Activated T-helper 1 cell treated with anti-CD3 and anti-CD28 coated beads, Interleukin-12 subunit alpha, Interleukin-12 subunit beta, Interleukin-2, Interleukin-4 antibody, amounts not matched to agents 30 ng/mL and 10 ng/mL and 1 ng/mL, durations not matched to agents 14 hours and 24 hours and 36 hours (primary cell): ENCODE measurements at regions of chr2 and their contacts with region 1.

Region 1: DNA sequence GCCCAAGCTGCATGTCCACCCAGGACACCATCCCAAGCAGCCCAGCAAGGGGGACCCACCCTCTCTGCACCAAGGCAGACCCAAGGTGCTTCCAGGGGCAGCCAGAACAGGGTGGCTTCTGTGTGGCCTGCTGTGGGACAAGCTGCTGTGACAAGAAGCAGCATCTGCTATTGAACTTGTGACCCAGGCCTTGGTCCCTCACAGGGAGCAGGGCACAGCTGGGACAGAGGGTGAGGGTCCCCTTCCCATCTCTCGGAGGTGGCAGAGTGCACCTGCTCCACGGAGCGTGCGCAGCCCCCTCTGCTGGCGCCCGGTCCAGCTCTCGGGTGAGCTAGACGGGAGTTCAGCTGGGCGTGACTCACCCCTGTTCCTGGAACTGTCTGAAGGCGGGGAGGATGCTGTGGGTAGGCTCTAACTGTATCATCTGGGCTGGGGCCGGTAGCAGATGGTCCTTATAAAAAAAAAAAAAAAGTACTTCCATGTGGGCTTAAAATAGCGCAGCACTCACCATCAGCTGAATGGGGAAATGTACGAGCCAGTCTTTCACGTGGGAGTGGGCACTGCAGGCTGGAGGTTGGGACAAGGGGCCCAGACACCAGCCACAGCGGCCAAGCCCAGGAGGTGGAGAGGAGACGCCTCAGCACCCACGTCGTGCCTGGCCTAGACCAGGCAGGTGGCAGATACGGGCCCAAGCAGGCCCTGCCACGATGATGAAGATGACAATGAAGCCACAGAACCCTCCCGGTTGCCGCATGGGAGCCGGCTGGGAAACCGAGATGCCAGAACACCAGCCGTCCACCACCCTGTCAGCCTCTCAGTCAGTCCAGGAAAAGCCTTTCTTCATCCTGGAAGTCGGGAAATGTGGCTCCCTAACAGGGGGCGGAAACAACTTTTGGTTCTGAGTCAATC is 136.8 kb upstream of the ID2 start:
- DNase-seq: peak; percentile 83
- H3K4me3 Mint-ChIP-seq: peak overlapping the region; percentile 59
- H3K27ac Mint-ChIP-seq: peak overlapping the region; percentile 99
- H3K4me1 Mint-ChIP-seq: peaks cover 80% of the 10 kb centered on the region
- H3K27me3 Mint-ChIP-seq: no peaks in the 10 kb centered on the region

Region 2: GRCh38 chr2:7588295-7588694 is 956.7 kb before region 1 on chr2:
- intact Hi-C with region 1: loop called (anchors 5 kb)
- DNase-seq: no peak
- H3K4me3 Mint-ChIP-seq: peak overlapping the region; percentile 28
- H3K27ac Mint-ChIP-seq: peak overlapping the region; percentile 61
- H3K4me1 Mint-ChIP-seq: peaks cover 37% of the 10 kb centered on the region
- H3K27me3 Mint-ChIP-seq: no peaks in the 10 kb centered on the region

Region 3: GRCh38 chr2:7845332-7845731 is 699.7 kb before region 1 on chr2:
- intact Hi-C with region 1: loop called (anchors 1 kb)
- DNase-seq: no peak
- H3K4me3 Mint-ChIP-seq: no peak overlapping the region
- H3K27ac Mint-ChIP-seq: no peak overlapping the region
- H3K4me1 Mint-ChIP-seq: peaks cover 57% of the 10 kb centered on the region
- H3K27me3 Mint-ChIP-seq: no peaks in the 10 kb centered on the region

Region 4: GRCh38 chr2:8303322-8303832 is 241.7 kb before region 1 on chr2:
- intact Hi-C with region 1: loop called (anchors 1 kb)
- DNase-seq: peak; percentile 77
- H3K4me3 Mint-ChIP-seq: peak overlapping the region; percentile 65
- H3K27ac Mint-ChIP-seq: peak overlapping the region; percentile 85
- H3K4me1 Mint-ChIP-seq: peaks cover 91% of the 10 kb centered on the region
- H3K27me3 Mint-ChIP-seq: peaks cover 7% of the 10 kb centered on the region

Region 5: DNA sequence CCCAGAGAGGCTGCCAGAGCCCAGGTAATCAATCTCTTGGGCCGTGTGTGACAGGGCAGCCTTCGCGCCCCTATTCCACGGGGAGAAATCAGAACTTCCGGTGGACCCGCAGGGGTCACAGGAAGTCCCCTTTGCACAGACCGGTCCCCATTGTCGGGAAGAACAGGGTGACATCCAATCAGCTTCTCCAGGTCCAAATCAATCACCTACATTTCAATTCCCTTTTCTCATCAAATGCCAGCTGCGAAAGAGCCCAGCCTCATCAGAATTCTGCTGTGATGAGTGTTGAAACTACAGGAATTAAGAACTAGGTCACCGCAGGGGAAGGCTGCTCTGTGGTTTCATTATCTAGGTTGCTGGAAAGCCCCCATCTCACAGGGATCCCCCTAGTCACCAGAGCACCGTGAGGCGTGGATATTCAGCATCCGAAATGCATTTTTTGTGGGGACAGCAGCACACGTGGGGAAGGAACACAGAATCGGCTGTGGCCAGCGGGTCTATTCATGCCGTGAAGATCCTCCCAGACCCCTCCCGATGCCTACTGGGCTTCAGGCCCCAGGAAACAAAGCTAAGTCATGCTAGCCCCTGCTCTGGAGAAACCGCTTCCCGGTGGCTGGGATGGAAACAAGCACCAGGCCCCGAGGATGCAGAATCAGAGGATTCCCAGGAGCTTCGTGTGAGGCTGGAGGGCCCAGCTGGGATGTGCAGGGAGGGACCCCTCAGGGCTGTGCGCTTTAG is 56.9 kb before region 1 on chr2:
- intact Hi-C with region 1: loop called (anchors 1 kb)
- DNase-seq: peak; percentile 57
- H3K4me3 Mint-ChIP-seq: peak overlapping the region; percentile 75
- H3K27ac Mint-ChIP-seq: peak overlapping the region; percentile 86
- H3K4me1 Mint-ChIP-seq: peaks cover 61% of the 10 kb centered on the region
- H3K27me3 Mint-ChIP-seq: no peaks in the 10 kb centered on the region

Region 6: GRCh38 chr2:8566774-8567478 is 21.9 kb after region 1 on chr2:
- intact Hi-C with region 1: no loop called
- DNase-seq: no peak
- H3K4me3 Mint-ChIP-seq: no peak overlapping the region
- H3K27ac Mint-ChIP-seq: no peak overlapping the region
- H3K4me1 Mint-ChIP-seq: no peaks in the 10 kb centered on the region
- H3K27me3 Mint-ChIP-seq: peaks cover 6% of the 10 kb centered on the region

Region 7: GRCh38 chr2:8681786-8682692 is 137.0 kb after region 1 on chr2 and contains the start of gene ID2:
- intact Hi-C with region 1: loop called (anchors 1 kb)
- DNase-seq: peak; percentile 99
- H3K4me3 Mint-ChIP-seq: peak within 1 kb of the TSS; percentile 99
- H3K27ac Mint-ChIP-seq: peak within 1 kb of the TSS; percentile 97
- H3K4me1 Mint-ChIP-seq: peaks cover 41% of the 10 kb centered on the region
- H3K27me3 Mint-ChIP-seq: peaks cover 14% of the 10 kb centered on the region
- total RNA-seq, gene ID2: 301 and 306 TPM in 2 replicates